Activated CD4-positive, alpha-beta memory T cell treated with anti-CD3 and anti-CD28 coated beads, Interleukin-2, amount 10 ng/mL, durations not matched to agents 7 days and 5 days (primary cell): ENCODE measurements at regions of chrX and their contacts with region 1.

Region 1: DNA sequence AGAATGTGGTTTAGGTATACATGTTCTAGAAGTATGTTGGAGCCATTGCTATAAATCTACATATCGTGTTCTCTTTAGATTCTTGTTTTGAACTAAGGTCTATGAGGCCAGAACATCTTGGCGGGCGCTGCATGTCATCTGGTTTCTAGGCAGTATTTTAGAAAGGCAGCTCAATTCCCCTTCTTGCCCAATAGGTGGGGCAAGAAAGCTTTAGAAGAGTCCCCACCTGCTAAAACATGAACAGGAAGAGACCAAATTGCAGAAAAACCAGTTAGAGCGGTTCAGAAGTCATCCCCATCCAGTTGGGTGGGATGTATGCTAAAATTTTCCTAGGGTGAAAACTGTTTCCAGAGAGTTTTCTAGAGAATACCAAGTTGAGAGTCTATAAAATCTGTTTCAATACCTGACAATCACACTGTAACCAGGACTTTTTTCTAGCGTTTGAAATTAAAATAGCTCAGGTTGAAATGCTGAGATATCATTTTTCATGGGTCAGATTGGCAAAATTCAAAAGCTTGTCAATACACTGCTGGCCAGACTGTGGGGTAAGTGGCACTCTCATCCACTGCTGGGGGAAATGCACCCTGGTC is 17.5 kb upstream of the SH3KBP1 start:
- DNase-seq: peak; percentile 19
- H3K4me3 Mint-ChIP-seq: no peak overlapping the region
- H3K27ac Mint-ChIP-seq: no peak overlapping the region
- H3K4me1 Mint-ChIP-seq: peaks cover 26% of the 10 kb centered on the region
- H3K27me3 Mint-ChIP-seq: no peaks in the 10 kb centered on the region

Region 2: GRCh38 chrX:19887911-19888879 is 16.7 kb before region 1 on chrX:
- CTCF ChIA-PET with region 1: no interaction called
- POLR2A ChIA-PET with region 1: no interaction called
- DNase-seq: peak; percentile 38
- H3K4me3 Mint-ChIP-seq: peak overlapping the region; percentile 75
- H3K27ac Mint-ChIP-seq: peak overlapping the region; percentile 69
- H3K4me1 Mint-ChIP-seq: peaks cover 50% of the 10 kb centered on the region
- H3K27me3 Mint-ChIP-seq: no peaks in the 10 kb centered on the region

Region 3: GRCh38 chrX:19990556-19991349 is 85.9 kb after region 1 on chrX and contains the start of gene BCLAF3:
- CTCF ChIA-PET with region 1: interaction called, 25 read pairs
- POLR2A ChIA-PET with region 1: no interaction called
- DNase-seq: peak; percentile 89
- H3K4me3 Mint-ChIP-seq: peak within 1 kb of the TSS; percentile 92
- H3K27ac Mint-ChIP-seq: peak within 1 kb of the TSS; percentile 83
- H3K4me1 Mint-ChIP-seq: peaks cover 20% of the 10 kb centered on the region
- H3K27me3 Mint-ChIP-seq: no peaks in the 10 kb centered on the region
- total RNA-seq, gene BCLAF3: 8.4 to 8.6 TPM

Region 4: DNA sequence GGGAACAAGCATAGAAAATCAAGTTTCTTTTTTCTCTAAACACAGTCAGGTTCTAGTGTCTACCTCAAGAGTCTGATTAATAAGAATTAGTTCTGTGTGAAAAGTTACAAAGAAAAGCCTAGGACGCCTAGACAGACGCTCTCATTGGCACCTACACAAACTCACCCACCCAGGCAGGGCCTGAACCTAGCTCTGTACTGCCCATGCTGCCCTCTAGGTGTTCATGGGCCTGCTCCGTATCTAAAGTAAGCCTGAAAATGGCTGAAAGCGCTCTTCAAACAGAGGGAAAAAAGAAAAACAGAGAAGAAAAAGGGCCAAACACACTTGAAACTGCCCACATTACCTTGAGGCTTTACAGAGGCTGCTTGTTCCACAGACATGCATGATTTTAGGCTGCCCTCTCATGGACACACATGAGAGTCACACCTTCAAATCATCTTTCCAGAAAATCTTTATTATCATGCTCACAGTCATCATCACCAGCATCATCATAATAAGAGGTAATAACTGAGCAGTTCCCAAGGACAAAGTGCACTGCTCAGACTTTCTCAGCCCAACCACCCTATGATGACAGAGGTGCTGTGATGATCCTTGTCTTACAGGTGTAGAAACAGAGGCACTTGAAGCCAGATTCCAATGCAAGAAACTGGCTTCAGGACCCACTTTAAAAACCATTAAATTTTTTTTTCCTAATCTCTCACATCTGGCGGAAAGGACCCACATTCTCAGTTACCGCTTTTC is 162.3 kb after region 1 on chrX:
- CTCF ChIA-PET with region 1: interaction called, 15 read pairs
- POLR2A ChIA-PET with region 1: no interaction called
- DNase-seq: peak; percentile 18
- H3K4me3 Mint-ChIP-seq: no peak overlapping the region
- H3K27ac Mint-ChIP-seq: no peak overlapping the region
- H3K4me1 Mint-ChIP-seq: no peaks in the 10 kb centered on the region
- H3K27me3 Mint-ChIP-seq: no peaks in the 10 kb centered on the region

Region 5: DNA sequence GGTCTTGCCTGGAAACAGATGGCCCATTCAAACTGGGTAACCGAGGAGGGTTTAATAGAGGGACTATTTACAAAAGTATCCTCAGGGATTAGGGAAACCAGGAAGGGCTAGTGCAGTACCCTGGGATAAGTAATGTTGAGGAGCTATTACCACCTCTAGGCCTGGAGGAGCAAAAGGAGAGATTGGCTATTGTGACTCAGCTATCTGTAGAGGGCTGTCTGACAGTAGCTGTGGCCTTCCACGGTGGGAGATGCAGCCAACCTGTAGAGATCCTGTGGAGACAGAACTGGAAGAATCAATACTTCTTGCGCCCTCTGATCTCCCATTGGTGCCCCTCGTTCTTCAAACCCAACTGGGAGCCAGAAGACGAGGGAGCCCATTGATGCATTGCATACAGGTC is 395.9 kb after region 1 on chrX:
- CTCF ChIA-PET with region 1: no interaction called
- POLR2A ChIA-PET with region 1: no interaction called
- DNase-seq: peak; percentile 16
- H3K4me3 Mint-ChIP-seq: no peak overlapping the region
- H3K27ac Mint-ChIP-seq: no peak overlapping the region
- H3K4me1 Mint-ChIP-seq: no peaks in the 10 kb centered on the region
- H3K27me3 Mint-ChIP-seq: peaks cover 11% of the 10 kb centered on the region